Dendritic cell treated with granulocyte-macrophage colony-stimulating factor and Interleukin-4, amounts not matched to agents 40 ng/mL and 50 ng/mL, for 4 days (primary cell): ENCODE measurements at regions of chr2 and their contacts with region 1.

Region 1: DNA sequence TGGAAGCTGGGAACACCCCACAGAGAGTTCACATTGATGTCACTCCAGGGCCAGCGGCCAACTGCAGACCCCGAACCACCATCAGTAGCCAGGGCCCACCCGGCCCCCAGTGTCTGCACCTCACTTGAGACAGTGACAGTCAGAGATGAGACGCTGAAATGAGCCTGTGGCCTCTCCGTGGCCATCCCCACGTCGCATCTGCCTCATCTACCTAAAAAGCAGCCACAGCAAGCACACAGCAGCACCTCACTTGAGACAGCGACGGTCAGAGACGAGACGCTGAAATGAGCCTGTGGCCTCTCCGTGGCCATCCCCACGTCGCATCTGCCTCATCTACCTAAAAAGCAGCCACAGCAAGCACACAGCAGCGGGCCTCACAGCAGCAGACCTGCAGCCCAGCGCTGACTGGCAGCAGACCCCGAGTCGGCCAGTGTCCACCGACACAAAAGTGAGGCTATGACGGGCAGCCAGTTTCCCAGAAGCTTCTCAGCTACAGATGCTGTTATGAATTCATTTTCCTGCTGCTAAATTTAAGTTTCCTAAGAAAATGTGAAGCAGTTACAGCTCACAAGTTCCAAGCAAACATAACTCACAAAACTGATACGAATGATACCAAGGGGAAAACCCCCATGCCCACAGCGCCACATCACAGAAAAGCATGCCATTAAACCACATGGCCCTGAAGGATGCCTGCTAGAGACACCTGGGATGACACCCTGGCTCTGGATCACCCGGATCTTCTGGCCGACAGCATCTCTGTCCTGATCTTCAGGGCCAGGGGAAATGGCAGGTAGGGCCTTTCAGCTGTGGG is 27.7 kb downstream of the SNORC start:
- H3K4me3 Mint-ChIP-seq: no peak overlapping the region
- H3K27ac Mint-ChIP-seq: no peak overlapping the region
- H3K4me1 Mint-ChIP-seq: peaks cover 5% of the 10 kb centered on the region
- H3K27me3 Mint-ChIP-seq: peaks cover 5% of the 10 kb centered on the region

Region 2: DNA sequence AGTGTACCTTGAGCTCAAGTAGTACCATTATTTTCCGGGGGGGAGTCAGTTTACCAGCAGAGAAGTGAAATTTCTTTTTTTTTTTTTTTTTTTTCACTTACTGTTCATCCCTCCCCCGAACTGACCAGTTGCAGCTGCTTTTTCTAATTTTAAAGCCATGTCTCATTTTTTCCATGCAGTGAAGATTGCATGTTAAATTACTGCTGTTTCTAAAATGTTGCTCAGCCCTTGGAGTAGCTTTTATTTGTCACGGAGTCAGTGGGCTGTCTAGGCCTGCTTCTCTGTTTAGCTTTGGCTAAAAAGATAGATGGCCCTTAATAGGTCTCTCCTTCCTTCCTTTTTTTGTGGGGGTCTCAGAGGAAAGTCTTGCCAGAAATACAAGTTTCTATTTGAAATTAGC is 45.0 kb after region 1 on chr2:
- intact Hi-C with region 1: loop called (anchors 2 kb)
- H3K4me3 Mint-ChIP-seq: no peak overlapping the region
- H3K27ac Mint-ChIP-seq: no peak overlapping the region
- H3K4me1 Mint-ChIP-seq: no peaks in the 10 kb centered on the region
- H3K27me3 Mint-ChIP-seq: peaks cover 13% of the 10 kb centered on the region